ENCODE measurements at regions of chr19 and their contacts with region 1.

Region 1: GRCh38 chr19:47863514-47863936 is 4.5 kb downstream of the TPRX2 start:
- DNase-seq: peak; percentile 88
- ATAC-seq: peak; percentile 98
- H3K4me3 Mint-ChIP-seq: no peak overlapping the region
- H3K27ac Mint-ChIP-seq: no peak overlapping the region
- H3K4me1 Mint-ChIP-seq: no peaks in the 10 kb centered on the region
- H3K27me3 Mint-ChIP-seq: peaks cover 14% of the 10 kb centered on the region
- CTCF ChIP-seq: peak; percentile 96

Region 2: DNA sequence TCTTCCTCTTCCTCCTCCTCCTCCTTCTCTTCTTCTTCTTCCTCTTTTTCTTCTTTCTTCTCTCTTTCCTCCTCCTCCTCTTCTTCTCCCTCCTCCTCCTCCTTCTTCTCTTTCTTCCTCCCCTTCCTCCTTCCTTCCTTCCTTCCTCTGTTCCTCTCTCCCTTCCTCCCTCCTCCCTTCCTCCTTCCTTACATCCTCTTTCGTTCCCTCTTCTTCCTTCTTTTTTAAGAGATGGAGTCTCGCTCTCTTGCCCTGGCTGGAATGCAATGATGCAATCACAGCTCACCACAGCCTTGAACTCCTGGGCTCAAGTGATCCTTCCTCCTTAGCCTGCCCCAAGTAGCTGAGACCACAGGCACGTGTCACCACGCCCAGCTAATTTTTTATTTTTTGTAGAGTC is 137.1 kb before region 1 on chr19:
- CTCF ChIA-PET with region 1: no interaction called
- POLR2A ChIA-PET with region 1: no interaction called
- intact Hi-C with region 1: no loop called
- DNase-seq: no peak
- ATAC-seq: no peak
- H3K4me3 Mint-ChIP-seq: no peak overlapping the region
- H3K27ac Mint-ChIP-seq: no peak overlapping the region
- H3K4me1 Mint-ChIP-seq: peaks cover 20% of the 10 kb centered on the region
- H3K27me3 Mint-ChIP-seq: peaks cover 33% of the 10 kb centered on the region
- CTCF ChIP-seq: no peak

Region 3: DNA sequence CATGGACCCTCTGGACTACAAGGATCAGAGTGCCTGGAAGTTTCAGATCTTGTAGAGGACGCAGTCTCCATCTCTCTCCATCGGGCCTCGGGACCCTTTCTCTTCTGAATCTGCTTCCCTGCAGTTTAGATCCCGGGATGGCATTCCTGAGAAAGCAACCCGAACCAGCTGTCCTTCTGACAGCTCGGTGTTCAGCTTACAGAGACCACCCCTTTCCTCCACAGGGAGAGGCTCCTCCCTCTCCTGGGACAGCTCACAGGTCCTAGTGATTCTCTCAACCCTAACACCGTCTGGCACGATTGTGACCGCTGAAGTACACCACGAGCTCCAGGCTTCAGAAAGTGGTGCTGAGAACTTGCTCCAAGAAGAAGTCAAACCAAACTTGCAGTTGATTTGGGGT is 23.6 kb before region 1 on chr19:
- CTCF ChIA-PET with region 1: interaction called, 11 read pairs
- POLR2A ChIA-PET with region 1: no interaction called
- intact Hi-C with region 1: no loop called
- DNase-seq: no peak
- ATAC-seq: no peak
- H3K4me3 Mint-ChIP-seq: no peak overlapping the region
- H3K27ac Mint-ChIP-seq: no peak overlapping the region
- H3K4me1 Mint-ChIP-seq: no peaks in the 10 kb centered on the region
- H3K27me3 Mint-ChIP-seq: peaks cover 13% of the 10 kb centered on the region
- CTCF ChIP-seq: no peak

Region 4: GRCh38 chr19:47848823-47849473 is 14.6 kb before region 1 on chr19:
- CTCF ChIA-PET with region 1: interaction called, 20 read pairs
- POLR2A ChIA-PET with region 1: interaction called, 3 read pairs
- intact Hi-C with region 1: no loop called
- DNase-seq: peak; percentile 74
- ATAC-seq: no peak
- H3K4me3 Mint-ChIP-seq: peak overlapping the region; percentile 27
- H3K27ac Mint-ChIP-seq: no peak overlapping the region
- H3K4me1 Mint-ChIP-seq: peaks cover 6% of the 10 kb centered on the region
- H3K27me3 Mint-ChIP-seq: peaks cover 38% of the 10 kb centered on the region
- CTCF ChIP-seq: peak; percentile 86

Measured in activated CD8-positive, alpha-beta T cell treated with anti-CD3 and anti-CD28 coated beads for 36 hours (primary cell).